ENCODE measurements at regions of chr2 and their contacts with region 1.

Region 1: GRCh38 chr2:177164584-177165052 is 48.0 kb upstream of the HNRNPA3 start:
- DNase-seq: peak; percentile 58 to 87 (median 82)
- ATAC-seq: peak; percentile 74
- H3K4me3 ChIP-seq: peak overlapping the region; percentile 29 to 36
- H3K4me3 Mint-ChIP-seq: no peak overlapping the region
- H3K27ac ChIP-seq: peak overlapping the region in 1 of 2 experiments; percentile 28
- H3K27ac Mint-ChIP-seq: no peak overlapping the region
- H3K4me1 ChIP-seq: peaks cover 23% of the 10 kb centered on the region
- H3K4me1 Mint-ChIP-seq: peaks cover 14% of the 10 kb centered on the region
- H3K27me3 ChIP-seq: no peaks in the 10 kb centered on the region
- H3K27me3 Mint-ChIP-seq: peaks cover 3% of the 10 kb centered on the region
- CTCF ChIP-seq: peak; percentile 100

Region 2: GRCh38 chr2:177148477-177149154 is 16.0 kb before region 1 on chr2:
- CTCF ChIA-PET with region 1: interaction called, 33 read pairs
- POLR2A ChIA-PET with region 1: interaction called, 4 read pairs
- intact Hi-C with region 1: no loop called
- DNase-seq: peak; percentile 47 to 84 (median 75)
- ATAC-seq: peak; percentile 89
- H3K4me3 ChIP-seq: peak overlapping the region; percentile 58 to 69
- H3K4me3 Mint-ChIP-seq: peak overlapping the region; percentile 86
- H3K27ac ChIP-seq: no peak overlapping the region
- H3K27ac Mint-ChIP-seq: no peak overlapping the region
- H3K4me1 ChIP-seq: peaks cover 11% of the 10 kb centered on the region
- H3K4me1 Mint-ChIP-seq: peaks cover 14% of the 10 kb centered on the region
- H3K27me3 ChIP-seq: peaks cover 6 to 14% of the 10 kb centered on the region in 2 experiments
- H3K27me3 Mint-ChIP-seq: peaks cover 29% of the 10 kb centered on the region
- CTCF ChIP-seq: peak; percentile 94

Region 3: GRCh38 chr2:177201919-177202346 is 37.3 kb after region 1 on chr2:
- CTCF ChIA-PET with region 1: interaction called, 21 read pairs
- POLR2A ChIA-PET with region 1: no interaction called
- intact Hi-C with region 1: no loop called
- DNase-seq: no peak
- ATAC-seq: no peak
- H3K4me3 ChIP-seq: no peak overlapping the region
- H3K4me3 Mint-ChIP-seq: no peak overlapping the region
- H3K27ac ChIP-seq: no peak overlapping the region
- H3K27ac Mint-ChIP-seq: no peak overlapping the region
- H3K4me1 ChIP-seq: no peaks in the 10 kb centered on the region
- H3K4me1 Mint-ChIP-seq: peaks cover 2% of the 10 kb centered on the region
- H3K27me3 ChIP-seq: no peaks in the 10 kb centered on the region
- H3K27me3 Mint-ChIP-seq: no peaks in the 10 kb centered on the region
- CTCF ChIP-seq: no peak

Region 4: GRCh38 chr2:177263451-177264208 is 99.0 kb after region 1 on chr2:
- CTCF ChIA-PET with region 1: interaction called, 72 read pairs
- POLR2A ChIA-PET with region 1: interaction called, 82 read pairs
- intact Hi-C with region 1: loop called in 1 of 2 experiments (anchors 1 kb)
- DNase-seq: peak; percentile 90 to 98 (median 96)
- ATAC-seq: peak; percentile 61
- H3K4me3 ChIP-seq: peak overlapping the region; percentile 86 to 97
- H3K4me3 Mint-ChIP-seq: peak overlapping the region; percentile 92
- H3K27ac ChIP-seq: peak overlapping the region; percentile 98 to 99
- H3K27ac Mint-ChIP-seq: peak overlapping the region; percentile 99
- H3K4me1 ChIP-seq: peaks cover 43% of the 10 kb centered on the region
- H3K4me1 Mint-ChIP-seq: peaks cover 49% of the 10 kb centered on the region
- H3K27me3 ChIP-seq: no peaks in the 10 kb centered on the region
- H3K27me3 Mint-ChIP-seq: no peaks in the 10 kb centered on the region
- CTCF ChIP-seq: peak; percentile 82

Region 5: DNA sequence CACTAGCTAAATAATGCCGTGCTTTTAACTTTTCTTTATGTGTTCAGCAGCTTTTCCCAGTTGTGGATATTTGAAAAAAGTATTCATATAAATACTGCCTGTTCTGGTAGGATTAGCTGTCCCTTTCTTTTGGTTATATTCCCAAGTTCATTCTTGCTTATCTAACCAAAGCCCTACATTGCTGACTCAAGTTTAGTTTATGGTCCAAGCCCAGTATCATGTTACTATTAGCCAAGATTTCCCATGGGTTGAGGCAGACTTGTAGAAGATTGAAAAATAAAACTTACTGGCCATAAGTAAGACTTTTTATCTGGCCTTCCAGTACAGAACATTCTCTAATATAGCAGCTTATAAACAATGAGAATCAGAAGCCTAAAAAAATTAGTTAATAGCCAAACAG is 149.6 kb after region 1 on chr2:
- CTCF ChIA-PET with region 1: interaction called, 13 read pairs
- POLR2A ChIA-PET with region 1: interaction called, 9 read pairs
- intact Hi-C with region 1: no loop called
- DNase-seq: no peak
- ATAC-seq: no peak
- H3K4me3 ChIP-seq: no peak overlapping the region
- H3K4me3 Mint-ChIP-seq: no peak overlapping the region
- H3K27ac ChIP-seq: no peak overlapping the region
- H3K27ac Mint-ChIP-seq: no peak overlapping the region
- H3K4me1 ChIP-seq: peaks cover 13% of the 10 kb centered on the region
- H3K4me1 Mint-ChIP-seq: peaks cover 28% of the 10 kb centered on the region
- H3K27me3 ChIP-seq: no peaks in the 10 kb centered on the region
- H3K27me3 Mint-ChIP-seq: no peaks in the 10 kb centered on the region
- CTCF ChIP-seq: no peak

Region 6: GRCh38 chr2:177419274-177419673 is 254.7 kb after region 1 on chr2:
- CTCF ChIA-PET with region 1: interaction called, 47 read pairs
- POLR2A ChIA-PET with region 1: interaction called, 8 read pairs
- intact Hi-C with region 1: loop called (anchors 1 kb)
- DNase-seq: no peak
- ATAC-seq: no peak
- H3K4me3 ChIP-seq: no peak overlapping the region
- H3K4me3 Mint-ChIP-seq: no peak overlapping the region
- H3K27ac ChIP-seq: no peak overlapping the region
- H3K27ac Mint-ChIP-seq: no peak overlapping the region
- H3K4me1 ChIP-seq: no peaks in the 10 kb centered on the region
- H3K4me1 Mint-ChIP-seq: peaks cover 27% of the 10 kb centered on the region
- H3K27me3 ChIP-seq: no peaks in the 10 kb centered on the region
- H3K27me3 Mint-ChIP-seq: no peaks in the 10 kb centered on the region
- CTCF ChIP-seq: no peak

Region 7: DNA sequence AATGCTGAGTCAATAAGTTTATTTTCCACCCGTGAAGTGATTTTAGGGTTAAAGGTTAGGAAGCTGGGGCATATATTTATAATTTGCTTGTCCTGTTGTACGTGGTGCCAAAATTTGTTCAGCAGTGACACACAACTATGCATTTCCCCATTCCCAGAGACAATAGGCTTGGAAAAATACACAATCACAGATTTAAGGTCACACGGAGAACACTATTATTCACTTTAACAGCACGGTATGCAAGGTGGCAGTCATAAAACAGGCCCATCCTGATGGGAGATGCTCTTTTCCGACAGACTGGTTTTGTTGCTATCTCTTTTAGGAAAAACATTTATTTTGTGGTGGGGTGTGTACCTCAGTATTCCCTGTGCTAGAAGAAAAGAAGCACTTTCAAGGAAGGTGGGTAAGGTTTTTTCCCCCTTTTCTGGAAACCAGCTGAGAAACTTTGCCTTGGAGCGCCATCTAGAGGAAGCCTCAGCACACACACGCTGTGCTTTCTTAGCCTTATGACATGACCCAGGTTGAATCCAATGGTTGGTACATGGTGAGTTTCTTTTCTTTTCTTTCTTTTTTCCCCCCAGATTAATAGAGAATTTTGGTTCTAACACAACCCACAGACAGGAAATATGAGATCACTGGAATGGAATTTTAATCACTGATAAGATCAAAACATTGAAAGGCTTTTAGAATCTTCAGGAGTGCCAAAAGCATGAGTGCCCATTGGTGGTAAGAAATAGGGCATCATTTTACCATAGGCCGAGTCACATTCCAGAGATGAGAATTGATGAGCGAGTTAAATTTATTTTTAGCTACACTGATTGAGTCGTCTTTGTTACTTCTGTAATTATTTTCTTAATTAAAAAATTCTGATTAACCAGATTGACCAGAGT is 560.0 kb after region 1 on chr2:
- CTCF ChIA-PET with region 1: interaction called, 10 read pairs
- POLR2A ChIA-PET with region 1: no interaction called
- intact Hi-C with region 1: loop called (anchors 1 to 2 kb)
- DNase-seq: peak in 8 of 9 experiments; percentile 10 to 56 (median 35)
- ATAC-seq: no peak
- H3K4me3 ChIP-seq: no peak overlapping the region
- H3K4me3 Mint-ChIP-seq: no peak overlapping the region
- H3K27ac ChIP-seq: no peak overlapping the region
- H3K27ac Mint-ChIP-seq: no peak overlapping the region
- H3K4me1 ChIP-seq: no peaks in the 10 kb centered on the region
- H3K4me1 Mint-ChIP-seq: no peaks in the 10 kb centered on the region
- H3K27me3 ChIP-seq: no peaks in the 10 kb centered on the region
- H3K27me3 Mint-ChIP-seq: peaks cover 21% of the 10 kb centered on the region
- CTCF ChIP-seq: peak; percentile 54

Measured in CD8-positive, alpha-beta T cell (primary cell).